ENCODE measurements at regions of chr2 and their contacts with region 1.

Region 1: DNA sequence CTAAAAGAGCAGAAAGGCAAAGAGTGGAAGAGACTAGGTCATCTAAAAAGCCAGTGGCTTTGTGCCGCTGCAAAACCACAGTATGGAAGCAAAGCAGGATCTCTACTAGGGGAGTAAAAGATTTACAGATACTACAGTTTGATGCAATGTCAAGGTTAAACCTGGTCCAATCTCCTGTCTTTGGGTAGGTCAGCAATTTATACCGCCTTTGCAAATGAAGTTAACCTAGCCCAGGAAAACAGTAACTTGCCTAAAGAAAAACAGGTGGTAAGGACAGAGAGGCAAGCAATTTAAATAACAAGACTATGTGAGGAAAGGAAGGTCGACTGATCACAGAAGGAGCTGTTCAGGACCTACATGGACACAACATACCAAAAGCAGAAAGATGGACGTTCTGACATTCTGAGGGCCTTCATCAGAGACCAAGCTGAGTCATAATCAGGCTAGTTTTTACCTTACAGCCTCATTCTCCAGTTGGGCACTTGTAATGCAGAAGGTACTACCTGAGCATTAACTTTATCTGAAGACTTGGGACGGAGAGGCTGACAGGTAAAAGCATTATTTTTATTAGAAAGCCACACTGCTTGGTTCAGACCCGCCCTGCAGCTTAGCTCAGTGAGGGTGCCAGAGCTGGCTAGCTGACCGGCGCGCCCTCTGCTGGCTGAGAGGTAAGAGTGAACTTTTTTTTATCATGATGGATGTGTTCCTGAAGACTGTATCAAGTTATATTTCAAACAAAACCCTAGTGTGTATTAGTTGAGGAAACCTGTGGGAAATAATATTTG is 15.9 kb downstream of the CDKL4 start:
- DNase-seq: peak; percentile 88
- H3K4me3 Mint-ChIP-seq: peak overlapping the region; percentile 64
- H3K27ac Mint-ChIP-seq: peak overlapping the region; percentile 90
- H3K4me1 Mint-ChIP-seq: peaks cover 53% of the 10 kb centered on the region
- H3K27me3 Mint-ChIP-seq: no peaks in the 10 kb centered on the region

Region 2: DNA sequence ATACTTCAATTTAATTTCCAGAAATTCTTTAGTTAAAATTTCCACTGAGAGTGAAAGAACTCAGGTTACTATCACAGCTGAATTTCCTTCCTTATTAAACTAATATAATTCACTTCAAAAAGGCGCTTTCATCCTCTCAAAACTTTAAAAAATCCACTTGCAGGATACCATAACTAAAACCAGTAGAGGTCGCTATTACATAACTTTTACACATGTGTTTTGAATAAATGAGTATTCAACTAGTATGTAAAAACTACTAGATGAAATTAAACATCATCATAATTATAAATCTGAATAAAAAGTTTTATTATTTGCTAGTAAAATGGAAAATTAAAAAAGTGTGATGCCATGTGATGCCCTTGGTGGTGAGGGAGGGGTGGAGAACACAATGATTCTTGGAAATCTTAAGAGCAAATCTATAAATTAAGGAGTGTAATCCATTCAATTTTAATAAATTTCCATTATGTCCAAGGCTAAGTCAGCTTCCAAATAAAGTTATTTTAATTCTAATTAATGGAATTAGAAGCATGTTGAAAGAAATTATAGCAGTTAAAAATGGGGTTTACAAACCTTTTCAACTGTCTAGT is 168.4 kb before region 1 on chr2:
- CTCF ChIA-PET with region 1: interaction called, 192 read pairs
- POLR2A ChIA-PET with region 1: interaction called, 7 read pairs
- DNase-seq: no peak
- H3K4me3 Mint-ChIP-seq: no peak overlapping the region
- H3K27ac Mint-ChIP-seq: no peak overlapping the region
- H3K4me1 Mint-ChIP-seq: peaks cover 37% of the 10 kb centered on the region
- H3K27me3 Mint-ChIP-seq: no peaks in the 10 kb centered on the region

Region 3: GRCh38 chr2:39107156-39107555 is 120.7 kb before region 1 on chr2:
- CTCF ChIA-PET with region 1: interaction called, 25 read pairs
- POLR2A ChIA-PET with region 1: interaction called, 36 read pairs
- DNase-seq: no peak
- H3K4me3 Mint-ChIP-seq: no peak overlapping the region
- H3K27ac Mint-ChIP-seq: peak overlapping the region; percentile 40
- H3K4me1 Mint-ChIP-seq: peaks cover 72% of the 10 kb centered on the region
- H3K27me3 Mint-ChIP-seq: no peaks in the 10 kb centered on the region

Region 4: GRCh38 chr2:39141331-39142271 is 86.2 kb before region 1 on chr2:
- CTCF ChIA-PET with region 1: interaction called, 26 read pairs
- POLR2A ChIA-PET with region 1: interaction called, 29 read pairs
- DNase-seq: peak; percentile 71
- H3K4me3 Mint-ChIP-seq: no peak overlapping the region
- H3K27ac Mint-ChIP-seq: peak overlapping the region; percentile 93
- H3K4me1 Mint-ChIP-seq: peaks cover 72% of the 10 kb centered on the region
- H3K27me3 Mint-ChIP-seq: no peaks in the 10 kb centered on the region

Region 5: DNA sequence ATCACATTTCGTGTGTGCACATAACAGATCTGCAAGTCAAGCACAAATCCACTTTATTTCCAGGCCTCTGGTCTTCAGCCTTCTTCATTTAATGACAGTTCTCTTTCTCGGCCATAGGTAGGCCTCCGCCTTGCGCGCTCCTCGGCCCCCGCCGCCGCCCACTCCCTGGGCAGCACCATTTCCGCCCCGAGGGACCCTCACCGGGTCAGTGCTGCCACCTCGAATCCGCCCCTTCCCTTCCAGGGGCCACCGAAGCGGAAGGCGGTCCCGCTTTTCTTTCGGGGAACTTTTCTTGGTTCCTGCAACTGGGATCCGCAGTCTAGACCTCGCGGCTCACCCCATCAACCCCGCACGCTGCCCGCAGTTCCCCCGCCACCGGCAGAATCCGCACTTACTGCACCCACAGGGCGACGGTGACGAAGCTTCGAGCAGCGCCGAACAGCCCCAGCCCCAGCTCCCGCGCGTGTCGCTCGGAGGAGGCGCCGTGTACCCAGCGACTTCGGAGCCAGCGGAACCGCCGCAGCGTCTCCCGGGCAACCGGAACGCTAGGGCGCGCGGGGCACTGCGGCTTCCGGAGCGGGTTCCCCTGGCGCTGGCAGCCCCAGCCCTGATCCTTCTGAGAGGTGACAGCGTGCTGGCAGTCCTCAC is 15.8 kb after region 1 on chr2 and contains the start of gene CDKL4:
- CTCF ChIA-PET with region 1: interaction called, 14 read pairs
- POLR2A ChIA-PET with region 1: interaction called, 8 read pairs
- DNase-seq: peak; percentile 57
- H3K4me3 Mint-ChIP-seq: peak within 1 kb of the TSS; percentile 67
- H3K27ac Mint-ChIP-seq: peak within 1 kb of the TSS; percentile 20
- H3K4me1 Mint-ChIP-seq: peaks cover 23% of the 10 kb centered on the region
- H3K27me3 Mint-ChIP-seq: peaks cover 6% of the 10 kb centered on the region
- total RNA-seq, gene CDKL4: 0.25 TPM in 1 of 2 experiments, not detected in the other

Region 6: DNA sequence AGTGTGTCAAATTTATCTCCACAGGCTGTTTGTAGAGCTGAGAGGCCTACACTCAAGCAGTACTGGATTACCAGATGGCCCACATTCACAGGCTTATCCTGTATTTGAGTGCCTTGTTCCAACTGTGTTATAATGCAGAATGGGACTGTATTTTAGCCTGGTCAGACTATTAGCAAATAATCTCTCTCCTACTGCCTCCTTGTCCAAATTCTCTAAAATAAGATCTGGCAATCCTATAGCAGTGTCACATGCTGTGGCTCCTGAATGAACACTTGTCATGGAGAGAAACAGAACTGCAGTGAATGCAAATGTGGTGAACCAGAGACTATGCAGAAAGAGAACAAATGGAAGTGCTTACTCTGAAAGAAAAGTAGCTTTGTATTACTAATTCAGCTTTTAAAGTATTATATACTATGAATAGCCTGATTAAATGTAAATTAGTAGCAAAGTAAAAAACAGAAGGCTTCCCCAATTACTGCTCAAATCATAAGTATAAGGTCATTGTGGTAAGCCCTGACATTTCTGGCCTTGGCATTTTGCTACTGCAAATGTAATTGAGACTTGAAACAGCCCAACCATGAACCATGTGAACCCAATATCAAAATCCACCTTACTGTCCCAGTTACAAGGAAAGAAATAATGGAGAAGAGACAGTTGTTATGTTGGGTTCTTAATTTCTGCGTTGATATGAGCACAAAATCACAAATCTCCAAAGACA is 129.3 kb after region 1 on chr2:
- CTCF ChIA-PET with region 1: no interaction called
- POLR2A ChIA-PET with region 1: no interaction called
- DNase-seq: no peak
- H3K4me3 Mint-ChIP-seq: no peak overlapping the region
- H3K27ac Mint-ChIP-seq: no peak overlapping the region
- H3K4me1 Mint-ChIP-seq: no peaks in the 10 kb centered on the region
- H3K27me3 Mint-ChIP-seq: no peaks in the 10 kb centered on the region

Measured in activated CD4-positive, alpha-beta memory T cell treated with anti-CD3 and anti-CD28 coated beads, Interleukin-2, amount 10 ng/mL, durations not matched to agents 7 days and 5 days (primary cell).